Mammary epithelial cell (primary cell): ENCODE measurements at regions of chr1 and their contacts with region 1.

Region 1: GRCh38 chr1:112715264-112716053 is at the start of gene PPM1J:
- DNase-seq: peak; percentile 96
- H3K4me3 ChIP-seq: peak within 1 kb of the TSS; percentile 71 to 73 (median 72)
- H3K27ac ChIP-seq: peak within 1 kb of the TSS; percentile 76
- H3K4me1 ChIP-seq: peaks cover 22% of the 10 kb centered on the region
- H3K27me3 ChIP-seq: no peaks in the 10 kb centered on the region
- CTCF ChIP-seq: no peak
- total RNA-seq, gene PPM1J: 6.2 to 9.4 TPM

Region 2: DNA sequence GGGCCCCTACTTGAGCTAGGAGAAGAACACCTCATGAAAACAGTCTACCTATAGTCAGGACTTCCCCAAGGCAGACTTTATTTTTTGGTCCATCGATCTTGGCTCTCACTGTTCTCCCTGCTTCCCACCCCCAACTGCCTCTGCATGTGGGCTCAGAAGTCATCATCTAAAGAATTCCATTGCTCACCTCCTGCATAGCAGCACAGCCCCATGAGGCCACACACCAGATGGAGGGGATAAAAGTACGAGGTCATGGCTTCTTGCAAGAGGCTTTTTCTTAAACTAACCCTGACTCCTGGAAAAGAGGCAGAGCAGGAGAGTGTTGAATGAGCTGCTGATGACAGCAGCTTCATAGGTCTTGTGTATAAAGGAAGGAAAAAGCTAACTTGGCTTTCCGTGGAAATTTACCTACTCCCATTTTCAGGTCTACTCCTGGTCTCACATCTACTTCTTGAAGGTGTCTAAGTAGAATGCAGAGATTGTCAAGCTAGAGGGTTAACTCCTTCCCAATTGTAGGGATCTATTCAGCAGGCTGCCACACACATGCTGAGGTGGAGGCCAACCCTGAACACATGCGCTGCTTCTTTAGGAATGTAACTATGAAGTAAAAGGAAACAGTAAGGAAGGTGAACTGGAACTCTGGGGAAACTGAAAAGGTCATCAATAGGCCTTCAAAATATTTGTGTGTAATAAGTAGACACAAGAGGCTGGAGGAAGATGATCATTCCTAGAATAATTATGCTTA is 188.0 kb before region 1 on chr1:
- CTCF ChIA-PET with region 1: no interaction called
- dilution Hi-C with region 1: no loop called
- in situ Hi-C with region 1: no loop called
- intact Hi-C with region 1: no loop called
- DNase-seq: no peak
- H3K4me3 ChIP-seq: no peak overlapping the region
- H3K27ac ChIP-seq: no peak overlapping the region
- H3K4me1 ChIP-seq: no peaks in the 10 kb centered on the region
- H3K27me3 ChIP-seq: no peaks in the 10 kb centered on the region
- CTCF ChIP-seq: no peak

Region 3: DNA sequence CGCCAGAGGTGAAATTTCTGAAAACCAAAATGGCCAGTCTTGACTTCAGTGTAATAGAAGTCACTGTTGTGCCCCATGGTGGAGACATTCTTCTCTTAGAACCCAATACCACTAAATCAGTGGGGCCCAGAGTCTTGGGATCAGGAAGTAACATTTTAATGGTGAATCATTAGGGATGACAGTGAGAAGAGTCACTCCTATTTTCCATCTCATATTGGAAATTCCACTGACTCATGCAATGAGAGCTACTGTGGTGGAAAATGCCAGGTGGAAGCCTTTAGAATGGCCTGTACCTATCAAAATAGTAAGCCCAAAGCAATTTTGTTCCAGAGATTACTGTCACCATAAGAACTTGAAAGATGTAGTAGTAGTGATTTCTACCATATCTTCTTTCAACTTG is 20.3 kb after region 1 on chr1:
- CTCF ChIA-PET with region 1: no interaction called
- dilution Hi-C with region 1: no loop called
- in situ Hi-C with region 1: no loop called
- intact Hi-C with region 1: loop called (anchors 2 kb)
- DNase-seq: peak; percentile 97
- H3K4me3 ChIP-seq: no peak overlapping the region
- H3K27ac ChIP-seq: peak overlapping the region; percentile 74
- H3K4me1 ChIP-seq: peaks cover 16% of the 10 kb centered on the region
- H3K27me3 ChIP-seq: no peaks in the 10 kb centered on the region
- CTCF ChIP-seq: no peak

Region 4: GRCh38 chr1:112803906-112804762 is 88.7 kb after region 1 on chr1:
- CTCF ChIA-PET with region 1: interaction called, 4 read pairs
- dilution Hi-C with region 1: loop called (anchors 5 kb)
- in situ Hi-C with region 1: loop called (anchors 5 kb)
- intact Hi-C with region 1: loop called (anchors 1 kb)
- DNase-seq: peak; percentile 59
- H3K4me3 ChIP-seq: no peak overlapping the region
- H3K27ac ChIP-seq: no peak overlapping the region
- H3K4me1 ChIP-seq: peaks cover 5% of the 10 kb centered on the region
- H3K27me3 ChIP-seq: no peaks in the 10 kb centered on the region
- CTCF ChIP-seq: peak; percentile 87 to 98

Region 5: GRCh38 chr1:112955781-112956543 is 240.5 kb after region 1 on chr1 and contains the start of gene SLC16A1:
- CTCF ChIA-PET with region 1: no interaction called
- dilution Hi-C with region 1: no loop called
- in situ Hi-C with region 1: no loop called
- intact Hi-C with region 1: loop called (anchors 2 kb)
- DNase-seq: peak; percentile 90
- H3K4me3 ChIP-seq: peak within 1 kb of the TSS; percentile 83 to 96 (median 93)
- H3K27ac ChIP-seq: peak within 1 kb of the TSS; percentile 78
- H3K4me1 ChIP-seq: peaks cover 22% of the 10 kb centered on the region
- H3K27me3 ChIP-seq: no peaks in the 10 kb centered on the region
- CTCF ChIP-seq: peak in 1 of 2 donors; percentile 30
- total RNA-seq, gene SLC16A1: 167 to 239 TPM

Region 6: GRCh38 chr1:113072757-113073478 is 357.5 kb after region 1 on chr1 and contains the start of gene LRIG2:
- CTCF ChIA-PET with region 1: interaction called, 7 read pairs
- dilution Hi-C with region 1: no loop called
- in situ Hi-C with region 1: loop called in 1 of 2 experiments (anchors 10 kb)
- intact Hi-C with region 1: loop called (anchors 2 kb)
- DNase-seq: peak; percentile 99
- H3K4me3 ChIP-seq: peak within 1 kb of the TSS; percentile 65 to 92 (median 86)
- H3K27ac ChIP-seq: peak within 1 kb of the TSS; percentile 75
- H3K4me1 ChIP-seq: peaks cover 11% of the 10 kb centered on the region
- H3K27me3 ChIP-seq: no peaks in the 10 kb centered on the region
- CTCF ChIP-seq: peak; percentile 57 to 66
- total RNA-seq, gene LRIG2: 11.6 to 17.3 TPM

Region 7: DNA sequence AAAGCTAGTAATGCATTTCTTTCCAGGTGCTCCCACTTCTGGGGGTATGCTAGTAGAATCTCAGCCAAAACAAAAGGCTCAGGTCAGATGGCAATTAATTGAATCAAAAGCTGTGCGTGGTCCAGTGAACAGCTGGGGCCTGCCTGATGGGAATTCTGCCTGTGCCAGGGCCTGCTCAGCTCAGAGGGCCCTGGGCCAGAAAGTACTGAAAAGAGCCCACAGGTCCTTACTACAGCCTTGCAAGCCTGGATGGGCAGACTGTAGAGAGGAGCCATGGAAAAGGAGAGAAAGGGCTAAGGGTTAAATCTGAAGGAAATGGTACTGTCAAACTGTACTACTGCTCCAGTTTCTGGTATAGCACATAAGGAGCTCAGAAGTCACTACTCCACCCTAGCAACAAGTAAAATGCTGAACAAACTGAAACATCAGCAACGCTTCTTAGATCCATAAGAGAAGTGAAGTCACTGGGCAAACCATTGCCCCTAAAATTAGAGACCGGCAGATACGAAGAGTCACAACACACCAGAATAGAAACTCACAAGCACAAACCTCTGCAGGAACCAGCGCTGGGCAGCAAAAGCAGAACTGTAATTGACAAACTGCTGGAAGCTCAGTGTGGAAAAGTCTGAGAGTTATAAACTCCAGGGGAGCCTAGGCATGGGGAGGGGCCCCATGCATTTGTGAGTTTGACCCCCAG is 1559.3 kb after region 1 on chr1:
- CTCF ChIA-PET with region 1: no interaction called
- dilution Hi-C with region 1: no loop called
- in situ Hi-C with region 1: no loop called
- intact Hi-C with region 1: loop called (anchors 5 kb)
- DNase-seq: no peak
- H3K4me3 ChIP-seq: no peak overlapping the region
- H3K27ac ChIP-seq: no peak overlapping the region
- H3K4me1 ChIP-seq: no peaks in the 10 kb centered on the region
- H3K27me3 ChIP-seq: peaks cover 2% of the 10 kb centered on the region
- CTCF ChIP-seq: no peak